PC-3 (cell line): ENCODE measurements at regions of chr13 and their contacts with region 1.

Region 1: GRCh38 chr13:48818495-48819031 is 157.1 kb upstream of the FNDC3A start:
- DNase-seq: peak; percentile 82
- ATAC-seq: peak; percentile 89
- H3K4me3 ChIP-seq: no peak overlapping the region
- H3K27ac ChIP-seq: peak overlapping the region; percentile 84
- H3K4me1 ChIP-seq: peaks cover 32% of the 10 kb centered on the region
- H3K27me3 ChIP-seq: no peaks in the 10 kb centered on the region
- CTCF ChIP-seq: no peak

Region 2: DNA sequence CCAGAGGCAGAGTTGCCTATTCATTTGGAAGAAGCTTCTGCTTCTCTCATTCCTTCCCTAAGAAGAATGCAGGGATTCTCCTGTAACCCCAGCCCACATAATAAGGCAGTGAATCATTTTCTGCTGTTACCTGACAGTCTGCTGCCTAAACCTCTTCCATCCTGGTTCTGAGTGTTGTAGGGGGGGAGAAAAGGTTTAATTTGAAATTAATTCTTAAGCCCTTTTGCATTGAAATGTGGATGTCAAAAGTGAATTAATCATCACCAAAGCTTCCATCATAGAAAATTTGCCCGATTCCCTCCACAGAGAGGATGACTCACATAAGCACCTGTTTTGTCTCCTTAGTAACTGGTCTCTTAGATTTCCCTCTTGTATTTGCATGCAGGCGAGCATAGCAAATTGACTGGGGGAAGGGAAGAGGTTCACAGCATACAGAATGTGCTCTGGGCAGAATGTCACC is 10.4 kb after region 1 on chr13:
- CTCF ChIA-PET with region 1: no interaction called
- POLR2A ChIA-PET with region 1: no interaction called
- intact Hi-C with region 1: loop called (anchors 2 kb)
- DNase-seq: peak; percentile 64
- ATAC-seq: peak; percentile 59
- H3K4me3 ChIP-seq: no peak overlapping the region
- H3K27ac ChIP-seq: peak overlapping the region; percentile 58
- H3K4me1 ChIP-seq: peaks cover 30% of the 10 kb centered on the region
- H3K27me3 ChIP-seq: no peaks in the 10 kb centered on the region
- CTCF ChIP-seq: no peak

Region 3: GRCh38 chr13:48892053-48892690 is 73.6 kb after region 1 on chr13:
- CTCF ChIA-PET with region 1: no interaction called
- POLR2A ChIA-PET with region 1: no interaction called
- intact Hi-C with region 1: loop called (anchors 1 kb)
- DNase-seq: peak; percentile 86
- ATAC-seq: peak; percentile 95
- H3K4me3 ChIP-seq: no peak overlapping the region
- H3K27ac ChIP-seq: peak overlapping the region; percentile 99
- H3K4me1 ChIP-seq: peaks cover 20% of the 10 kb centered on the region
- H3K27me3 ChIP-seq: no peaks in the 10 kb centered on the region
- CTCF ChIP-seq: no peak